Heart left ventricle (tissue), 16 donors: ENCODE measurements at regions of chr7 and their contacts with region 1.

Region 1: DNA sequence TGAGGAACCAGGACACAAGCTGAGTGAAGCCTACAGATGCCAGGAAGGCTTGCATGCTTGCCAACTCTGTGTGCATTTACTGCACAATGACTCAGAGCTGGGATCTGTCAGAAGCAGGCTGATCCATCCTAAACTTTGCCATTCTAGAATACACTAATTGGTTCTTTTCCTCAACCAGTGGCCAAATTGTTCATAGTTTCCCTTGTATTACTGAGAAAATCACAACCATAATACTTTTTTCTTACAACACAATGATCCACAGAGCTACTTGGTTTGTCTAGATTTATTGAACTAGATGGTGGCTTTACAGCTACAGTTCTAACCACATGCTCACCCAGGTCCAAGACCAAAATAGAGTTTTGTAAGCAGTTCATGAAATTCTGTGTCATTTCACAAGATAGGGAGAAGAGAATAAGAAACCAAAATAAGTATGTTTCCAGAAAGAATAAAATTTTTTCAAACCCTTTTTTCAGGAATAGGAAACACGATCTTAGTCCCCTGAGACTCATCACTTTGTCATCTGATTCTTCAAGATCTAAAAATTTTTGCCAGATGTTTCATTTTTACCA is 21.0 kb upstream of the LRRC17 start:
- DNase-seq: peak in 3 of 5 donors; percentile 32 to 49 (median 38)
- ATAC-seq: peak; percentile 49 to 82 (median 72)
- H3K4me3 ChIP-seq: no peak overlapping the region
- H3K27ac ChIP-seq: peak overlapping the region in 6 of 12 donors; percentile 21 to 61 (median 50)
- H3K4me1 ChIP-seq: peaks cover 2 to 62% (median 19%) of the 10 kb centered on the region in 12 donors
- H3K27me3 ChIP-seq: no peaks in the 10 kb centered on the region
- CTCF ChIP-seq: no peak
- POLR2A ChIP-seq: no peak

Region 2: DNA sequence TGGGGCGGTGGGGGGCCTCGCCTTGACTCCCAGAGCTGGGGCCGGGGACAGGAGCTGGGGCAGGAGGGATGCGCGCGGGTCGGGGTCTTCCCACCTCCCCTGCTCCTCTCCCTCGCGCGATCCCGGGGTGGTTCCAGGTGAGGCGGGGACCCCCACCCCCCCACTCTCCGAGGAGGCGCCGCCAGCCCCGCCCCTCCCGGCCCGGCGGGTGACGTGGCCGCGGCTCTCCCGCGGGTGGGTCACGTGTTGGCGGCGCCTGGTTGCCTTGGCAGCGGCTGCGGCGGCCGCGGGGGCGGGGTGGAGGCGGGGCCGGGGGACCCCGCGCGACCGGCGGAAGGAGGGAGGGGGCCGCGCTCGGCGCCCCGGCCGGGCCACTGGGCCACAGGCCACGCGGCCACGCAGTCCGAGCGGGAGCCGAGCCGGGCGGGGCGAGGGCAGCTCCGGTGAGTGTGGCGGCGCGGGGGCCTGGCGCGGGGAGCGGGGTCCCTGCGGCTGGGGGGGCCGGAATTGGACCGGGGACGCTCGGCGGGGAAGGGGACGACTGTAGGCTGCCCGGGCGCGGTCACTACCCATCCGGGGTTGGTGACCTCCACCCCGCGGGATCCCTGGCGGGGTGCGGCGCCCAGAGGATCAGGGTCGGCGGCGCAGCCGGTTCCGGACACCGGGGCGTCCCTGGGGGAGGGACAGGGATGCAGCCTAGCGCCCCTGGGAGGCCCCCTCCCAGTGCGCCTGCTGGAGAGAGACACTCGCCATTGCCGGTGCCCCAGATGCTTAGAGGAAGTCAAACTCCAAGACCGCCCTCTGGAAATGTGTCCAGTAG is 458.3 kb before region 1 on chr7 and contains the start of gene ORAI2:
- intact Hi-C with region 1: no loop called
- DNase-seq: peak; percentile 82 to 93 (median 86)
- ATAC-seq: peak; percentile 27 to 86 (median 80)
- H3K4me3 ChIP-seq: peak within 1 kb of the TSS; percentile 73 to 95 (median 86)
- H3K27ac ChIP-seq: peak within 1 kb of the TSS in 11 of 12 donors; percentile 54 to 84 (median 69)
- H3K4me1 ChIP-seq: peaks cover 0 to 44% (median 5%) of the 10 kb centered on the region in 12 donors
- H3K27me3 ChIP-seq: no peaks in the 10 kb centered on the region
- CTCF ChIP-seq: no peak
- POLR2A ChIP-seq: peak in 1 of 2 donors; percentile 30
- total RNA-seq, gene ORAI2: 1.9 to 22.0 (median 4.8) TPM

Region 3: DNA sequence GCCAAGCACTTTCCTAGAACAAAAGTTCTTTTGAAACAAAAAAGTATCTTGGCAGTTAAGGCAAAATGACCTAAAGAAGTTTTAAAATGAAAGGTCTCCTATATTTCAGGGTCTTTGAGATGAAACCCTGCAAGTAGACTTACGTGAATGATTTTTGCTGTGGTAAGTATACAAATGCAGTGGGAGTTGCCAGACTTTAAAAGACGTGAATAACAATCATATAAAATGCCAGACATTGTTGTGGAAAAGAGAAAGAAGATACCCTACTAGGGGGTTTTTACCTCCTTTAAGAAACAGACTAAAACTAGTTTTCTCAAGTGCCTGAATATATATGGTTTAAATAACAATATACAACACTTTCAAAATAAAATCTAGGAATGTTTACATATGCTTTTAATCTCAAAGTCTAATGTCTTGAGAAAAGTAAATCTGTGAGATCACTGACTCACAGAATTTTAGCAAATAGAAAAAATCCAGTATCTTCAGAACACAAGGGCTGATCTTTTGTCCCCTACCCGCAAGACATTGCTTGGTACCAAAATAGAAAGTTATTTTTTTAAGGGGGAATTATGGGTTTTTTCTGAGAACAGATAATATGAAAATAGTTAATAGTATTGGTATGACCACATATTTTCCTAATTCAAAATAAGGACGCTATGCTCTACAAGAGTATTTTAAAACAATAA is 50.5 kb after region 1 on chr7:
- intact Hi-C with region 1: loop called in 2 of 10 experiments (anchors 10 kb)
- DNase-seq: no peak
- ATAC-seq: peak in 1 of 4 donors; percentile 26
- H3K4me3 ChIP-seq: no peak overlapping the region
- H3K27ac ChIP-seq: peak overlapping the region in 5 of 12 donors; percentile 4 to 55 (median 39)
- H3K4me1 ChIP-seq: peaks cover 0 to 42% (median 21%) of the 10 kb centered on the region in 12 donors
- H3K27me3 ChIP-seq: no peaks in the 10 kb centered on the region
- CTCF ChIP-seq: no peak
- POLR2A ChIP-seq: no peak